K562 (cell line): ENCODE measurements at regions of chr17 and their contacts with region 1.

Region 1: DNA sequence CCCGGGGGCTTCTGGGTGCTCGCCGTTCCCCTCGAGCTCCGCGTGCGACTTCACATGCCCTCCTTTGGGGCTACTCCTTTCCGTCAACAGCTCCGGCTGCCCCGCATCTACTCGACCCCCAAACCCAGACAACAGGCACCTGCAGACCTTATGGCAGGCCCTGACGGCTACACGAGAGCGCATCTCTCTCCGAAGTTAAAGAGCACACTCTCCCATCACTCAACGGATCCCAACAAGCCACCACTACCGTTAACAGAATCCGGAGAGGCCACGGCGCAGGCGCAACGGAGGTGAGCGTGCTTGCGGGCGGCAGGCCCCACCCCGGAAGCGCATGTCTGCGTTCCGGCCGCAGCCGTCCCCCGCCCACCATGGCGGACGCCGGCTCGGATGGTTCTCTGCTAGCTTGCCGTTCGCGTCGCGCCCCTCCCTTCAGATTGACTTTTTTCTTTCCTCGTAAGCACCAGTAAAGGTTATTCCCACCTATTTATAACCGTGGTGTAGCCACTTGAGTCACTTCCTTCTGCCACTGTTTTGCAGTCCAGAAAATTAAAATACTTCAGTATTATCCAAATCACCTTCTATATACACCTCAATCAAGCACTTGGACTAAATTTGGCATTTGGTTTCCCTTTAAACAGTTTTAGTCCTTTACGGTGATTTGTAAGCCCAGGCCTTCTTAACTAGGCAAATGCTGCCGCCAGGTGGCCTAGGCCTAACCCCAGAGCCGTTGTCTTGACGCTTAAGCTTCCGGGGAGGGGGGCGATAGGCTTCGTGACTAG is at the start of gene POLG2:
- DNase-seq: peak; percentile 90 to 96 (median 93)
- ATAC-seq: peak; percentile 86
- H3K4me3 ChIP-seq: peak within 1 kb of the TSS; percentile 69
- H3K27ac ChIP-seq: peak within 1 kb of the TSS; percentile 90
- H3K4me1 ChIP-seq: peaks cover 4 to 10% of the 10 kb centered on the region in 2 experiments; a peak in 3 of 5 replicates
- H3K27me3 ChIP-seq: no peaks in the 10 kb centered on the region
- CTCF ChIP-seq: peak; percentile 66 to 84 (median 69)
- EP300 ChIP-seq: peak; percentile 7
- POLR2A ChIP-seq: peak; percentile 94
- RAD21 ChIP-seq: peak; percentile 67 to 73
- polyA plus RNA-seq, gene POLG2: 13.4 to 14.6 TPM

Region 2: DNA sequence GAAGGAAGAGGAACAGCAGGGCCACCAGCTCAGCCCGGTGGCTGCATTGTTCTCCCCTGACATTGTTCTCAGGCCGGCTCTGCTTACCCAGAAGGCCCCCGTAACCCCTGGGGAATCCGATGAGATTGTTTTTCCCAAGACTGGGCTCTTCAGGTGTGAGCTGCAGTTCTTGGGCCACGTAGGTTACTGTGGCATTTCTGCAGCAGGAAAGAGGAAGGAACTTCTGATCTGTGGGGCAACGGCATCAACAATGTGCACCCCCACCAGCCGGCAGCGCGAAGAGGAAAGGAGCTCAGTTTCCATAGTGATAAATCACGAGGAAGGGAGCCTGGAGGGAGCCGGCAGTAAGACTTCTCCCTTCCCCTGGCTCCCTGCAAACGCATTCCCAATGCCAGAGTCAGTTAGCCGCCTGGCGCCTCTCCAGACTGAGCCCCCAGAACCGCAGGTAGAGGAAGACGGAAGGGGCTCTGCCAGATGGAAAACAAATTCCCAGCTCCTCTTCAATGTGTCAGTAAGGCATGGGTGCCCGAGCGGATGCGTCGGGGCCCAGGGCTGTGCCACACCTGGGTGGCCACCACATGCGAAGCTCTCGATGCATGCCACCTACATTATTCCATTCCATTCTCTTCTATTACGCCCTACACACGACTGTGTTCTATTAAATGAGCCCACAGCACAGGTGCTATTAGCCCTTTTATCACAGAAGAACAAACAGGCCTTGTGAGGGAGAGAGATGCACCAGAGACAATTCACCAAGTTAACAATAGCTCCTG is 84.8 kb before region 1 on chr17:
- CTCF ChIA-PET with region 1: no interaction called
- POLR2A ChIA-PET with region 1: no interaction called
- in situ Hi-C with region 1: no loop called
- intact Hi-C with region 1: no loop called
- DNase-seq: peak in 1 of 4 experiments; percentile 7
- ATAC-seq: no peak
- H3K4me3 ChIP-seq: no peak overlapping the region
- H3K27ac ChIP-seq: no peak overlapping the region
- H3K4me1 ChIP-seq: peaks cover under 1 to 6% of the 10 kb centered on the region in 2 experiments
- H3K27me3 ChIP-seq: no peaks in the 10 kb centered on the region
- CTCF ChIP-seq: no peak
- EP300 ChIP-seq: no peak
- POLR2A ChIP-seq: no peak
- RAD21 ChIP-seq: no peak

Region 3: GRCh38 chr17:64484380-64484779 is 12.6 kb before region 1 on chr17:
- CTCF ChIA-PET with region 1: no interaction called
- POLR2A ChIA-PET with region 1: interaction called, 12 read pairs
- in situ Hi-C with region 1: no loop called
- intact Hi-C with region 1: no loop called
- DNase-seq: no peak
- ATAC-seq: no peak; the same call in 2 of the 3 replicates
- H3K4me3 ChIP-seq: no peak overlapping the region
- H3K27ac ChIP-seq: no peak overlapping the region
- H3K4me1 ChIP-seq: no peaks in the 10 kb centered on the region
- H3K27me3 ChIP-seq: no peaks in the 10 kb centered on the region
- CTCF ChIP-seq: no peak
- EP300 ChIP-seq: no peak
- POLR2A ChIP-seq: no peak
- RAD21 ChIP-seq: no peak

Region 4: DNA sequence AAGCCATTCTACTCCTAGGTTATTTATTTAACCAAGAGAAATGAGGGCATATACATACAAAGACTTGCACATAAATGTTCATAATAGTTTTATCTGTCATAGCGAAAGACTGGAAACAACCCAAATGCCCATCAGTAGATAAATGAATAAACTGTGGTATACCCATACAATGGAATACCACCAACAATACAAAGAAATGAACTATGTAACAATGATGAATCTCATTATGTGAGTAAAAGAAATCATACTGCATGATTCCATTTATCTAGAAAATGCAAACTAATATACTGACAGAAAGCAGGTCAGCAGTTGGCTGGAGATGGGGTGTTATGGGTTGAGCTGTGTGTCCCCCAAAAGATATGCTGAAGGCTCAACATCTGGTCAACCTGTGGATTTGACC is 67.1 kb after region 1 on chr17:
- CTCF ChIA-PET with region 1: no interaction called
- POLR2A ChIA-PET with region 1: no interaction called
- in situ Hi-C with region 1: no loop called
- intact Hi-C with region 1: no loop called
- DNase-seq: no peak
- ATAC-seq: no peak
- H3K4me3 ChIP-seq: no peak overlapping the region
- H3K27ac ChIP-seq: no peak overlapping the region
- H3K4me1 ChIP-seq: no peaks in the 10 kb centered on the region
- H3K27me3 ChIP-seq: no peaks in the 10 kb centered on the region
- CTCF ChIP-seq: no peak
- EP300 ChIP-seq: no peak
- POLR2A ChIP-seq: no peak
- RAD21 ChIP-seq: no peak

Region 5: GRCh38 chr17:64599187-64599676 is 102.3 kb after region 1 on chr17:
- CTCF ChIA-PET with region 1: no interaction called
- POLR2A ChIA-PET with region 1: interaction called, 3 read pairs
- in situ Hi-C with region 1: no loop called
- intact Hi-C with region 1: loop called (anchors 2 kb)
- DNase-seq: peak; percentile 30 to 88 (median 54)
- ATAC-seq: peak; percentile 98
- H3K4me3 ChIP-seq: peak overlapping the region; percentile 29
- H3K27ac ChIP-seq: peak overlapping the region; percentile 84
- H3K4me1 ChIP-seq: peaks cover 5 to 9% of the 10 kb centered on the region in 2 experiments; a peak in 4 of 5 replicates
- H3K27me3 ChIP-seq: no peaks in the 10 kb centered on the region
- CTCF ChIP-seq: no peak
- EP300 ChIP-seq: no peak
- POLR2A ChIP-seq: peak; percentile 82
- RAD21 ChIP-seq: no peak

Region 6: DNA sequence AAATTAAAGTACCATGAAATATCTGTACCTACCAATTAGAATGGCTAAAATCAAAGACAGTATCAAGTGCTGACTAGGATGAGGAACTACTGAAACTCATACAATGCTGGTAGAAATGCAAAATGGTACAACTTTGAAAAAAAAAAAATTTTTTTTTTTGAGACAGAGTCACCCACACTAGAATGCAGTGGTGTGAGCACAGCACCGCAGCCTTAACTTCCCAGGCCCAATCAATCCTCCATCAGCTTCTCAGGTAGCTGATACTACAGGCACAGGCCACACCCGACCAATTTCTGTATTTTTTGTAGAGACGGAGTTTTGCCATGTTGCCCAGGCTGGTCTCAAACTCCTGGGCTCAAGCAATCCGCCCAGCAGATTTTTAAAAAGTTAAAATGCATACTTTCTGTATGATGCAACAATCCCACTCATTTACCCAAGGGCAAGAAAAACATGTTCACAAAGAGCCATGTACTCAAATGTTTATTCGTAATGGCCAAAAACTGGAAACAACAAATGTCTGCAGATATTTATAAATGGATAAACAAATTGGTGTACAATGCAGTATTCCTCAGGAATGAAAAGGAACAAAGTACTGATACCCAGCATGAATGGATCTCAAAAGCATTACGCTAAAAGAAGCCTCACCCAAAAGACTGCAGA is 156.5 kb after region 1 on chr17:
- CTCF ChIA-PET with region 1: interaction called, 8 read pairs
- POLR2A ChIA-PET with region 1: interaction called, 14 read pairs
- in situ Hi-C with region 1: no loop called
- intact Hi-C with region 1: loop called (anchors 1 kb)
- DNase-seq: no peak
- ATAC-seq: peak; percentile 51
- H3K4me3 ChIP-seq: no peak overlapping the region
- H3K27ac ChIP-seq: 0 out of 3 replicates have a peak overlapping the region, but pooled peaks have one; percentile 9
- H3K4me1 ChIP-seq: peaks cover 2 to 13% of the 10 kb centered on the region in 2 experiments; a peak in 3 of 5 replicates
- H3K27me3 ChIP-seq: no peaks in the 10 kb centered on the region
- CTCF ChIP-seq: no peak
- EP300 ChIP-seq: no peak
- POLR2A ChIP-seq: no peak
- RAD21 ChIP-seq: no peak